ENCODE measurements at regions of chr17 and their contacts with region 1.

Region 1: DNA sequence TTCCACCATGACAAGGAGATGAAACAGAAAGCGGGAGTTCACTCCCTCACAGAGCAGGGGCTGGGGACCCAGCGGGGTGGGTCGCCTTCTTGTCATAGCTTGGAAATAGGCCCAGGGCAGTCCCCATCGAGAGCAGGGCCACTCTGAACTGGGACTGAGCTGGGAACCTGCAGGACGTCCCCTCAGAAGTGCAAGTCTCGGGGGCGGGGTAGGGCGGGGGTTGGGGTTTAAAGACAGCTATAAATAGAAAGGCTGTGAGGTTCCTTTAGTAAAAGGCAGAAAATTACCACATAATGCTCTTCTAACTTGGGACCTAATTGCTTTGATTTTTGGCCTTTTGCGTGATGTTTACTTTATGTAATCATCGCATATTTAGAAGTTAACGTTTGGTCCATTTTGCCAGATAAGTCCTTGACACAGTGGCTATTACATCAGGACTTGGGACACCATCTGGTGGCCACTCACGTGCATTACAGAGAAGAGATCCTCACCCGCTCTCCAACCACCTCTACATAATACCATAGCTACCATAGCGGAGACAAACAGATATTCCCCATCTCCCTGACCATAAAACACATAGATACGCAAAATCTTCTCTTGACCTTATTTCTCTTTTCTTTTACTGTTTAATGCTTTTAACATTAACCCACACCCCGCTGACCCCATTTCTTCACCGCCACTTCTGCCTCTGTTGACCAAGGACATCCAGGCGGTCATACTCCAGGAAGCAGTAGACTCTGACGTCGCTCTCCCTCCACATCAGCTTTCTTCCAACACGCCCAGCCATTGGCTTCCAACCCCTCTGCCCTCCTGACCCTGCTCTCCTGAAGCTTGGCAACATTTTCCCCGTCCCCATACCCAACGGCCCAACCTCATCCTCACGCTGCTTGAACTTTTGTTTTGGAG is 27.5 kb upstream of the PIK3R6 start:
- DNase-seq: no peak
- ATAC-seq: peak in 1 of 4 donors; percentile 70
- H3K4me3 ChIP-seq: no peak overlapping the region
- H3K27ac ChIP-seq: no peak overlapping the region
- H3K4me1 ChIP-seq: no peaks in the 10 kb centered on the region
- H3K27me3 ChIP-seq: peaks cover 0 to 7% (median 2%) of the 10 kb centered on the region in 3 donors
- CTCF ChIP-seq: peak; percentile 67

Region 2: DNA sequence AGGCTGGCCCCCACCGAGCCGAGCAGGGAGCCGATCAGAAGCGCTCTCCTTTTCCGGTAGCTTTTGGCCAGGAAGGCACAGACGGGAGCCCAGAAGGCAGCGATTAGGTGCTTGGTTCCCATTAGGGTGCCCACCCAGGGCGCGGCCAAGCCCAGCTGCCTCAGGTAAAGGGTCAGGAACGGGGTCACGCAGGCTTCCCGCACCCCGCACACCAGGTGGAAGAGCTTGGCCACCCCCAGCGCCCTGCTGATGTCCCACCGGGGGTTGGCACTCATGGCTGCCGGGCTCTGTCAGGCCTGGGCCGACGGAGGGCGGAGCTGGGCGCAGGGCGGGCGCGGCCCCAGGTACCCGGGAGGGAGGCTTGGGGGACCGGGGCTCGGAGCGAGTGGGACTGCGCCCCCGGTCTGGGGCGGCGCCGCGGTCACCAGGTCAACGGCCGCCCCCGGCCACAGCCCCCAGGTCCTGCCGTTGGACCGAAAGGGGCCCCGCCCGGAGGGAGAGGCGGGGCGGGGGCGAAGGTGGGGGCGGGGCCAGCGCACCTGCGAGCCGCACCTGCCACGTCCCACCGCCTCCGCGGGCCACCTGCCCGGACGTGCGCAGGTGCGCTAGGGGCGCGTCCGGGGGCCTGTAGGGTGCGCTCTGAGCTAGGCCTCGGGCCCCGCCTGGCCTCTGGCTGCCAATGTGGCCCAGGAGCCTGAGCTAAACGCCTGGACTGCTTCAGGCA is 95.9 kb before region 1 on chr17 and contains the start of gene MFSD6L:
- intact Hi-C with region 1: loop called in 1 of 2 experiments (anchors 10 kb)
- DNase-seq: no peak
- ATAC-seq: no peak
- H3K4me3 ChIP-seq: no peak within 1 kb of the TSS
- H3K27ac ChIP-seq: no peak within 1 kb of the TSS
- H3K4me1 ChIP-seq: no peaks in the 10 kb centered on the region
- H3K27me3 ChIP-seq: peaks cover 0 to 27% (median 3%) of the 10 kb centered on the region in 3 donors
- CTCF ChIP-seq: no peak
- total RNA-seq, gene MFSD6L: not detected

Measured in psoas muscle (tissue), 8 donors.